Activated CD8-positive, alpha-beta T cell treated with anti-CD3 and anti-CD28 coated beads for 36 hours (primary cell): ENCODE measurements at regions of chrX and their contacts with region 1.

Region 1: DNA sequence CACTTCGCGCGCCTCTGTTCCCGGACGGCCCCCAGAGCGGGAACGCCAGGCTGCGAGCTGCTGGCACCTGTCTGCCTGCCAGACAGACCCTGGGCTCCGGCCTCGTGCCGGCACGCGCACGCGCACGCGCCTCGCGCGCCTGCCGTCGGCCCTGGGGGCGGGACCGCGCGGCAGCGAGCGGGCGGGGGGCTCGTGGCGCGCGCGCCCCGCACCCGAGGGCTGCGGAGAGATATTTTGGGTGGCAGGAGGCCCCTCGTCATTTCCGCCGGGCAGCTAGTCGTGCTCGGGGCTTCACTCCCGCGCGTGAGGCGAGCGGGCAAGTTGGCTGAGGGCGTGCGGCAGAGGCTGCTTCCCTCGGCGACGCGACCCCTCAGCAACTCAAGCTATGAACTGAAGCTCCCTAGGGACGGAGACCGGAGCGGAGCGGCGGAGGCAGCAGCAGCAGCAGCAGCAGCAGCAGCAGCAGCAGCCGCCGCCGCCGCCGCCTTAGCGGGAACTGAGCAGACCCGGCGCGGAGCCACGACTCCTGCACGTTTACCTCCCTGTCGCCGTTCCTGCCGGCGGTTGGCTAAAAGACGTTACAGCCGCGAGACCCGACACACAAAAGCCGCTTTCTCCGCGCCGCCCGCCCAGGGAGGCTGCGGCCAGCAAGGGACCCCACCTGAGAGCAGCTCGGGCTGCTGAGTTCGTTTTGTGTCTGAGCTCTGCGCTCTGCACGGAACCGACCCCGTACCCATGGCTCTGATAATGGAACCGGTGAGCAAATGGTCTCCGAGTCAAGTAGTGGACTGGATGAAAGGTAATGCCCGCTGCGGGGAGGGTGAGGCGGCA is at the start of gene CNKSR2:
- DNase-seq: peak; percentile 68
- ATAC-seq: peak; percentile 76
- H3K4me3 Mint-ChIP-seq: peak within 1 kb of the TSS; percentile 87
- H3K27ac Mint-ChIP-seq: peak within 1 kb of the TSS; percentile 85
- H3K4me1 Mint-ChIP-seq: peaks cover 32% of the 10 kb centered on the region
- H3K27me3 Mint-ChIP-seq: no peaks in the 10 kb centered on the region
- CTCF ChIP-seq: no peak
- total RNA-seq, gene CNKSR2: 8.3 to 9.4 TPM

Region 2: DNA sequence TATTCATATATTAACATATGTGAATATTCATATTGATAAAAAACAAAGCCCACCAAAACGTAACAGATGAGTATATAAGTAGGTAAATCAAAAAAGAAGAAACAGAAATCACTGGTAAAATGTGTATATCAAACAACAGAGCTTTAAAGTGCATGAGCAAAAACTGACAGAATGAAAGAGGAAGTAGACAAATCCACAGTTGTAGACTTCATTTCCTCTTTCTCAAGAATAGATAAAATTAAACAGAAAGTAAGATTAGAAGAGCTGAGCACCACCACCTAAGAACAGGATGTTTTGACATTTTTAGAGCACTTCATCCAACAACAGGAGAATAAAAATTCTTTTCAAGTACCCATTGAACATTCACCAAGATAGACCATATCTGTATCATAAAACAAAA is 64.4 kb after region 1 on chrX:
- CTCF ChIA-PET with region 1: no interaction called
- POLR2A ChIA-PET with region 1: no interaction called
- intact Hi-C with region 1: loop called (anchors 10 kb)
- DNase-seq: no peak
- ATAC-seq: peak; percentile 84
- H3K4me3 Mint-ChIP-seq: peak overlapping the region; percentile 71
- H3K27ac Mint-ChIP-seq: peak overlapping the region; percentile 92
- H3K4me1 Mint-ChIP-seq: peaks cover 21% of the 10 kb centered on the region
- H3K27me3 Mint-ChIP-seq: no peaks in the 10 kb centered on the region
- CTCF ChIP-seq: no peak